ENCODE measurements at regions of chr22 and their contacts with region 1.

Region 1: DNA sequence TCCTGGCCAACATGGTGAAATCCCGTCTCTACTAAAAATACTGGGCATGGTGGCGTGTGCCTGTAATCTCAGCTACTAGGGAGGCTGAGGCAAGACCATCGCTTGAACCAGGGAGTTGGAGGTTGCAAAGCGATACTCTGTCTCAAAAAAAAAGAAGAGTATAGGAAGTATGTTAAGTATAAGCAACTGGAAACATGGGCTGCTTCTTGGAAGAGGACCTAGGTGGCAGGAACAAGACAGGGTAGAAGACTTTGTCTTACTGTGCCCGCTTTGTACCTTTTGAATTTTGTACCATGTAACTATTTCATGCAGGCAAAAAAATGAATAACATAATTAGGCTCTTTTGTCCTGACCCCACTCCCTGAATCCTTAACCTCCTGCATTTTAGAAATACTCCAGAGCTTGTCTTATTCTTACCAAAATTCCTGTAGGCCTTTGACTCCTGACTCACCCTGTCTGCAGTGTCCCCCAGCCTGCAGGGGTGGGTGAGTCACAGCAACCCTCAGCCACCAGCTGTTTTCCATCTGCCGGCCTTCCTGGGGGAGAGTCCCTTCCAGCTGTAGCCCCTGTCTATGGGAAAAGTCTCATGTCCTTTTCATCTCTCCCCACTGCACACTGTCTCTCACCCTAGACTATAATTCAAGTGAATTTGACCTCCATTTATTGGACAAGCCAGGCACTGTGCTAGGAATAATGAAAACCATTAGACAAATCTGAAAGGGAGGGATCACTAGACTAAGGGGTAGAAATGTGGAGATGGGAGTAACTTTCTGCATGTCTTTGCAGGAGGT is 41.8 kb downstream of the TXN2 start:
- DNase-seq: peak; percentile 91
- H3K27ac ChIP-seq: peak overlapping the region; percentile 66
- CTCF ChIP-seq: no peak

Region 2: DNA sequence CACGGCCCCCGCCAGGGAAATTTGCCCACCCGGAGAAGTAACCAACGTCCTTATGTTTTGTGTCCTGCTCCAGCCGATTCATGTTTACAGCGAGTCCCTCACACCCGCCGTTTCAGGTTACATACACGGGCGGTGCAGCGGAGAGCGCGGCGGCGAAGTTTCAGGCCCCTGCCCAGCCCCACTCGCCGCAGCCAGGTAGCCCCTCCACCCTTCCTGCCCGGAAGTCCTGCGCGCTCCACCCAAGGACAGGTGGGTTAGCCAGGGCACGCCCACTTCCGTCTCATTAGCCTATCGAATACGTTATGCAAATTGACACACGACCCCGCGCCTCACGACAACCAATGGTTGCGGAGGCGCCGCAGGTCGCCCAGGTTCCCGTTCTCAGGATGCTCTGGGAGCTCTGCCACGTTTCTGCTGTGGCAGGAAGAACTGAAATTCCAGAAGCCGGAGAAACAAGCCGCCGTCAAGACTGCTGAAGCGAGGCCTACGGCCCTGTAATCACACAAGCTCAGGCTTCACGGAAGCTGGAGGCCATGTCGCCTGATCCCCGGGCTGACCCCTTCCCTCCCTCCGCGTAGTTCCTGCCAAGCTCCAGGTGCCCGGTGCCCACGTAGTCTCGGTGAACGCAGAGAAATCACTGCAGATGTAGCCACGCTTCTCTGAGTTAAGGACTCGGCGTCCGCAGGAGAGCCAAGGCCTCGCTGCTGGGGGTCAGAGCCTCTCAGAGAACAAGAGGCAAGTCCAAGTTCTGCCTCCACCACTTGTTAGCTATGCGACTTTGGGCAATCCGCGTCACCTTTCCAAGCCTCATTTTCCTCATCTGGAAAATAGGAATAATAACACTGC is 29.5 kb before region 1 on chr22:
- CTCF ChIA-PET with region 1: no interaction called
- POLR2A ChIA-PET with region 1: interaction called, 12 read pairs
- DNase-seq: peak; percentile 88
- H3K27ac ChIP-seq: peak overlapping the region; percentile 91
- CTCF ChIP-seq: no peak

Region 3: GRCh38 chr22:36577019-36577418 is 137.3 kb after region 1 on chr22:
- CTCF ChIA-PET with region 1: no interaction called
- POLR2A ChIA-PET with region 1: no interaction called
- DNase-seq: peak; percentile 39
- H3K27ac ChIP-seq: no peak overlapping the region
- CTCF ChIP-seq: no peak

Measured in RWPE1 (cell line).